ENCODE measurements at regions of chr9 and their contacts with region 1.

Region 1: DNA sequence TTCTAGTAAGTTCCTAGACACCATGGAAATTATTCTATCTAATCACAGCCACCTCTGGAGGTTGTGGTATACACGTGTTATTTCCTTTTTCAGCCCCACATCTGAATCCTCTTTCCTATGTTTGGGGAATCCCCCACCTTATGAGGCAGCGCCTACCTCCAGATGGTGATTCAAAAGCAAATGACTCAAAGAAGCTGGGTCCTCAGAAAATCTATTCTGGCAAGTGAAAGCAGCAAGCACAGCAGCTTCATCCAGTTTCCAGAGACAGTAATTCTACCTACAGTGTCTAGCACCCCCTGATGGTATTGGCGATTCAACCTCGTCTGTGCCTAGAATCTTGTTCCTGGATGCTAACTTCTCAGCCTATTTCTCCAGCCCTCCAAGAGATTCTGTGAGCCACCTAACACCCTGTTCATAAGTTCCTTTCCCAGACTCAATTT is 43.0 kb downstream of the STRBP start:
- DNase-seq: peak; percentile 86
- ATAC-seq: peak; percentile 92
- H3K4me3 ChIP-seq: no peak overlapping the region
- H3K4me3 Mint-ChIP-seq: peak overlapping the region; percentile 64
- H3K27ac ChIP-seq: peak overlapping the region; percentile 46 to 77
- H3K27ac Mint-ChIP-seq: peak overlapping the region; percentile 79
- H3K4me1 ChIP-seq: peaks cover 65 to 68% of the 10 kb centered on the region in 2 donors
- H3K4me1 Mint-ChIP-seq: peaks cover 55% of the 10 kb centered on the region
- H3K27me3 ChIP-seq: no peaks in the 10 kb centered on the region
- H3K27me3 Mint-ChIP-seq: no peaks in the 10 kb centered on the region
- CTCF ChIP-seq: peak; percentile 72

Region 2: DNA sequence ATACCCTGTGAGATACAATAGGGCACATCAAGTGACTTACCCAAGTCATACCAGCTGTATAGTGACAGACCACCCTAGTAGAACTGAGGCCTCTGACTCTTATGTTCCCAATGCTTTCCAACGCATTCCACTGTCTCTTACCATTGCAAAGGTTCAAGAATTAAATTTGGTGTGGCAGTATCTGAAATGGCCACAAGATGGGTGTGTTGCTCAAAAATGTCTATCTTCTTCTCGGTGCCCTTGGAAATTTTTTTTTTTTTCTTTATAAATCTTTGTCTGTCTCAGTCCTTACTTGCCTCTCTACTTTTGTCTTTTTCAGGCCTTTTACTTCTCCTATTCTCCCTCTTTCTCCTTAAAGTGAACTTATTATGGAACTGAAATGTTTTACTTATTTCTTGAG is 143.6 kb before region 1 on chr9:
- CTCF ChIA-PET with region 1: interaction called, 37 read pairs
- POLR2A ChIA-PET with region 1: no interaction called
- intact Hi-C with region 1: loop called (anchors 1 kb)
- DNase-seq: peak; percentile 67
- ATAC-seq: peak; percentile 54
- H3K4me3 ChIP-seq: no peak overlapping the region
- H3K4me3 Mint-ChIP-seq: no peak overlapping the region
- H3K27ac ChIP-seq: no peak overlapping the region
- H3K27ac Mint-ChIP-seq: no peak overlapping the region
- H3K4me1 ChIP-seq: peaks cover 0 to 8% of the 10 kb centered on the region in 2 donors
- H3K4me1 Mint-ChIP-seq: peaks cover 22% of the 10 kb centered on the region
- H3K27me3 ChIP-seq: no peaks in the 10 kb centered on the region
- H3K27me3 Mint-ChIP-seq: no peaks in the 10 kb centered on the region
- CTCF ChIP-seq: peak; percentile 81

Region 3: DNA sequence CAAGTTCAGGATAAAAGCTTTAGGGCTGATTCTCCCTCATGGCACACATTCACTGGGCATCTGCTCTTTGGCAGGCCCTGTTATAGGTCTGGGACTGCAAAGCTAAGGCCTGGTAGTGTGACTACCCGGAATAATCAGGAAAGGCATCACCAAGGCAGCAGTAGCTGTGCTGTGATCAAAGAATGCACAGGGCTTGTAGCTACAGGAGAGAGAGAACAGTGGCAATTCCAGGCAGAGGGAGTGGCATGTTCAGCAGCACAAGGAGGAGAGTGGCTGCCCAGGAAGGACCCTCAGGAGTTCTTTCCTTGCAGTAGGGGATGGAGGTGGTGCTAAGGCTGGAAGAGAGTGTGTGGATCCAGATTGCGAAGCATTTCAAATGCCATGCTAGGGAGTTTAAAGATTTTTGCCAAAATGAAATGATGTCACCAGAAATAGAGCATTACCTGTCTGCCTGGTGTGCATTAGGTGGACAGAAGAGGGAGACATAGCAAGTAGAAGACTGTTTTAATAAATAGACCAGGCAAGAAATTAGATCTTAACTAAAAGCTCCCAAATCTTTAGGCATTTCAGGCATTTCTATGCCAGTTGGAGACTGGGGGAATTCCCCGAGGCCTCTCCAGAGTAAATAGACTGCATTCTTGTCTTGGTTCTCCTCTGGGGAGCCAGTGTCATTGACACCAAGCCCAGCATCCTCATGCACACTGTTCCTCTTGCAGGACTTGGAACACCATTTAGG is 122.9 kb before region 1 on chr9:
- CTCF ChIA-PET with region 1: interaction called, 15 read pairs
- POLR2A ChIA-PET with region 1: interaction called, 6 read pairs
- intact Hi-C with region 1: loop called (anchors 5 kb)
- DNase-seq: no peak
- ATAC-seq: no peak
- H3K4me3 ChIP-seq: no peak overlapping the region
- H3K4me3 Mint-ChIP-seq: no peak overlapping the region
- H3K27ac ChIP-seq: peak overlapping the region in 1 of 2 donors; percentile 54
- H3K27ac Mint-ChIP-seq: peak overlapping the region; percentile 66
- H3K4me1 ChIP-seq: no peaks in the 10 kb centered on the region
- H3K4me1 Mint-ChIP-seq: peaks cover 2% of the 10 kb centered on the region
- H3K27me3 ChIP-seq: no peaks in the 10 kb centered on the region
- H3K27me3 Mint-ChIP-seq: no peaks in the 10 kb centered on the region
- CTCF ChIP-seq: peak; percentile 36

Region 4: DNA sequence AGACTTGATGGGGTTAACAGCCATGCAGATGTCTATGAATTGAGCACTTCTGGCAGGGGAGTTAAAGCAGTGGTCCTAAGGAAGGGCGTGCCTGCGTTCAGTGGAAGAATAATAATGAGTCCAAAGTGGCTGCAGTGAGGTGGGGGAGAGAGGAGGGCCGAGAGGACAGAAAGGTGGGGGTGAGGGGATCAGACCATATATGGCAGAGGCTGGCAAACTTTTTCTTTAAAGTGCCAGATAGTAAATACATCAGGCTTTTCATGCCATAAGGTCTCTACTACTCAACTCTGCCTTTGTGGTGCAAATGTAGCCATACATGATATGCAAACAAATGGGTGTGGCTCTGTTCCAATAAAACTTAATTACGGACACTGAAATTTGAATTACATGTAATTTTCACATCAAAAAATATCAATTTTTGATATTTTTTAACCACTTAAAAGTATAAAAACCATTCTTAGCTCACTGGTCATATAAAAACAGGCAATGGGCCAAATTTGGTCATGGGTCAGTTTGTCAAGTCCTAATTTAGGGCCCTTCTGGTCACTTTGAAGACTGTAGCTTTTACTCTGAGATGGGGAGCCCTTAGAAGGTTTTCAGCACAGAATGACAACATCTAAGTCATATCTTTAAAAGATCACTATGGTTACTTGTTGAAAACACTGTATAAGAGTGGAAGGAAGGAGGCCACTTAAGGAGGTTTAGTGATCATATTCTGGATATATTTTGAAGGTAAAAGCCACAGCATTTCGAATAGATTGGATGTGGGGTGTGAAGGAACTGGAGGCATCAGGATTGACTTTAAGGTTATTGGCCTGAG is 33.9 kb before region 1 on chr9:
- CTCF ChIA-PET with region 1: interaction called, 11 read pairs
- POLR2A ChIA-PET with region 1: interaction called, 5 read pairs
- intact Hi-C with region 1: no loop called
- DNase-seq: no peak
- ATAC-seq: no peak
- H3K4me3 ChIP-seq: no peak overlapping the region
- H3K4me3 Mint-ChIP-seq: no peak overlapping the region
- H3K27ac ChIP-seq: peak overlapping the region; percentile 2 to 35
- H3K27ac Mint-ChIP-seq: no peak overlapping the region
- H3K4me1 ChIP-seq: peaks cover 40 to 49% of the 10 kb centered on the region in 2 donors
- H3K4me1 Mint-ChIP-seq: peaks cover 16% of the 10 kb centered on the region
- H3K27me3 ChIP-seq: no peaks in the 10 kb centered on the region
- H3K27me3 Mint-ChIP-seq: no peaks in the 10 kb centered on the region
- CTCF ChIP-seq: no peak

Region 5: DNA sequence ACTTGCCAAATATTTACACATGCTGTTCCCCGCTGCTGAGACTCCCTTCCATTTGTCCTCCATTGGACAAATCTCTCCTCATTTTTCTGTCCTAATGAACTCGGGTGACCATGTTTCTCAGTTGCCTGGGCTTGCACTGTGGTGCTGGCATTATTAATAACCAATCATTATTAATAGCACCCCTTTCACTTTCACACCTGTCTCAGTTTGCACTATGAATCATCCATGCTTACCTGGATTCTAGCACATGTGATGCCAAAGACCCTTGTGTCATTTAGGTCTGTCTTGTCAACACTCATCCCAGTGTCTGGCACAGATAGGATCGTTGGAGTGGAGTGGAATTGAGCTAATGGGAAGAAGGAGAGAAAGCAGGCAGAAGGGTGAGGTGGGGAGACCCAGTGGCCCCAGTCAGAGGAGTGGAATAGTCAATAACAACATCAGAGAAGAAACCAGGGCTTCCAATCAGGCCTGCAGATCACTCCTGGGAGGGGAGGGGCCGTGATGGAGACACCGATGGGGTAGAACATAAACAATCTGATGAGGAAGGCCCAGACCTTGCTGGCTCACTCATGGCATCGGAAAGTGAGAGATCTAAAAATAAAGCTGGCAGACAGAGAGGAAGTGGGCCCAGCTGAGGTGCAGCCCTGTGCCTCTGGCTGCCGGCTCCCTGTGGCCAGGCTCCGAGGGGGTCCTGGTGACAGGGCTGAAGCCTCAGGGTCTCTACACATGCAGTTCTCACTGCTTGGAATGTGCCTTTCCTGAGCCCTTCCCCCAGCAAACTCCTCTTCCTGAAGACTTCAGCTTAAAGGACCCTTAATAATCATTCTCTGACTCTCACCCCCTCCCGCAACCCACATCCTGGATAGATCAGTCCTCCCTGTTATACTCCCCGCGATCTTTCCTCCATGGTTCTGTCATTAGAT is 97.1 kb after region 1 on chr9:
- CTCF ChIA-PET with region 1: interaction called, 4 read pairs
- POLR2A ChIA-PET with region 1: no interaction called
- intact Hi-C with region 1: loop called (anchors 5 kb)
- DNase-seq: peak; percentile 76
- ATAC-seq: peak; percentile 79
- H3K4me3 ChIP-seq: peak overlapping the region in 4 of 5 experiments; percentile 1 to 41 (median 34)
- H3K4me3 Mint-ChIP-seq: peak overlapping the region; percentile 66
- H3K27ac ChIP-seq: peak overlapping the region; percentile 73 to 86
- H3K27ac Mint-ChIP-seq: peak overlapping the region; percentile 89
- H3K4me1 ChIP-seq: peaks cover 70 to 85% of the 10 kb centered on the region in 2 donors
- H3K4me1 Mint-ChIP-seq: peaks cover 86% of the 10 kb centered on the region
- H3K27me3 ChIP-seq: no peaks in the 10 kb centered on the region
- H3K27me3 Mint-ChIP-seq: no peaks in the 10 kb centered on the region
- CTCF ChIP-seq: no peak

Region 6: GRCh38 chr9:123629531-123629930 is 404.1 kb after region 1 on chr9:
- CTCF ChIA-PET with region 1: no interaction called
- POLR2A ChIA-PET with region 1: no interaction called
- intact Hi-C with region 1: no loop called
- DNase-seq: no peak
- ATAC-seq: no peak
- H3K4me3 ChIP-seq: no peak overlapping the region
- H3K4me3 Mint-ChIP-seq: no peak overlapping the region
- H3K27ac ChIP-seq: no peak overlapping the region
- H3K27ac Mint-ChIP-seq: no peak overlapping the region
- H3K4me1 ChIP-seq: no peaks in the 10 kb centered on the region
- H3K4me1 Mint-ChIP-seq: no peaks in the 10 kb centered on the region
- H3K27me3 ChIP-seq: no peaks in the 10 kb centered on the region
- H3K27me3 Mint-ChIP-seq: no peaks in the 10 kb centered on the region
- CTCF ChIP-seq: no peak

Region 7: GRCh38 chr9:123716339-123716945 is 491.0 kb after region 1 on chr9:
- CTCF ChIA-PET with region 1: no interaction called
- POLR2A ChIA-PET with region 1: no interaction called
- intact Hi-C with region 1: no loop called
- DNase-seq: peak; percentile 20
- ATAC-seq: peak; percentile 36
- H3K4me3 ChIP-seq: no peak overlapping the region
- H3K4me3 Mint-ChIP-seq: peak overlapping the region; percentile 6
- H3K27ac ChIP-seq: no peak overlapping the region
- H3K27ac Mint-ChIP-seq: no peak overlapping the region
- H3K4me1 ChIP-seq: peaks cover 10 to 20% of the 10 kb centered on the region in 2 donors
- H3K4me1 Mint-ChIP-seq: peaks cover 27% of the 10 kb centered on the region
- H3K27me3 ChIP-seq: no peaks in the 10 kb centered on the region
- H3K27me3 Mint-ChIP-seq: no peaks in the 10 kb centered on the region
- CTCF ChIP-seq: no peak

Measured in B cell (primary cell).